ENCODE measurements at regions of chr2 and their contacts with region 1.

Region 1: DNA sequence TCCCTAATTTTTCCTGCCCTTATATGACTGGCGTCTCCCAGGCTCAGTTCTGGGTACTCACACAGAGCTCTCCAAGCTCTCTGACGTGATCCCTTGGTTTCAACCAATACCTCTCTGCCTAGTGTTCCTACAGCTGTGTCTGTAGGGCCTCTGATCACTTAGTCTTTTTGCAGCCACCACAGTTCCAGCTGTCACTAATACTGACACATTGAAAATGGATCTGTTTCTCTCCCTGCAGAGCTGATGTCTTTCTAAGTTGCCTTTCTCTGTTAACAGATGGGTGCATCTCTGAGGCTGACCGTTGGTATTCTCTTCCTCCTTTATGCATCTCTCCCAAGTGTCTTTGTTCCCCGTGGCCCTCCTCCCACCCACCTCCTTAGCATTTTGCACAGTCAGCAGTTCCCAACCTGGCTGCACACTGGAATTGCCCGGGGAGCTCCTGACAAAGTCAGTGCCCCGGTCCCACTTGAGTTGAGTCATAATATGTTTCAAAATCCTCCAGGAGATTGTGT is 62.5 kb downstream of the CERS6 start:
- DNase-seq: no peak
- H3K4me3 ChIP-seq: no peak overlapping the region
- H3K27ac ChIP-seq: peak overlapping the region in 43 of 59 donors; percentile 9 to 86 (median 54)
- H3K27me3 ChIP-seq: no peaks in the 10 kb centered on the region
- CTCF ChIP-seq: no peak

Region 2: GRCh38 chr2:168494190-168494711 is 24.4 kb before region 1 on chr2:
- intact Hi-C with region 1: loop called in 1 of 2 experiments (anchors 2 kb)
- DNase-seq: no peak
- H3K4me3 ChIP-seq: no peak overlapping the region
- H3K27ac ChIP-seq: no peak overlapping the region
- H3K27me3 ChIP-seq: no peaks in the 10 kb centered on the region
- CTCF ChIP-seq: peak in 19 of 56 donors; percentile 6 to 49 (median 19)

Region 3: GRCh38 chr2:168583064-168583709 is 64.6 kb after region 1 on chr2:
- intact Hi-C with region 1: no loop called
- DNase-seq: no peak
- H3K4me3 ChIP-seq: peak overlapping the region in 1 of 59 donors; percentile 1
- H3K27ac ChIP-seq: peak overlapping the region in 9 of 59 donors; percentile 13 to 40 (median 27)
- H3K27me3 ChIP-seq: no peaks in the 10 kb centered on the region
- CTCF ChIP-seq: no peak

Measured in dorsolateral prefrontal cortex (tissue), 120 donors.